ENCODE measurements at regions of chr6 and their contacts with region 1.

Region 1: GRCh38 chr6:154156135-154156896 is 117.3 kb downstream of the OPRM1 start:
- DNase-seq: peak; percentile 26
- H3K4me3 Mint-ChIP-seq: peak overlapping the region; percentile 43
- H3K27ac Mint-ChIP-seq: peak overlapping the region; percentile 84
- H3K4me1 Mint-ChIP-seq: peaks cover 26% of the 10 kb centered on the region
- H3K27me3 Mint-ChIP-seq: peaks cover 5% of the 10 kb centered on the region

Region 2: GRCh38 chr6:154229786-154230185 is 73.5 kb after region 1 on chr6:
- intact Hi-C with region 1: loop called (anchors 1 kb)
- DNase-seq: peak; percentile 49
- H3K4me3 Mint-ChIP-seq: peak overlapping the region; percentile 46
- H3K27ac Mint-ChIP-seq: peak overlapping the region; percentile 47
- H3K4me1 Mint-ChIP-seq: peaks cover 57% of the 10 kb centered on the region
- H3K27me3 Mint-ChIP-seq: no peaks in the 10 kb centered on the region

Region 3: DNA sequence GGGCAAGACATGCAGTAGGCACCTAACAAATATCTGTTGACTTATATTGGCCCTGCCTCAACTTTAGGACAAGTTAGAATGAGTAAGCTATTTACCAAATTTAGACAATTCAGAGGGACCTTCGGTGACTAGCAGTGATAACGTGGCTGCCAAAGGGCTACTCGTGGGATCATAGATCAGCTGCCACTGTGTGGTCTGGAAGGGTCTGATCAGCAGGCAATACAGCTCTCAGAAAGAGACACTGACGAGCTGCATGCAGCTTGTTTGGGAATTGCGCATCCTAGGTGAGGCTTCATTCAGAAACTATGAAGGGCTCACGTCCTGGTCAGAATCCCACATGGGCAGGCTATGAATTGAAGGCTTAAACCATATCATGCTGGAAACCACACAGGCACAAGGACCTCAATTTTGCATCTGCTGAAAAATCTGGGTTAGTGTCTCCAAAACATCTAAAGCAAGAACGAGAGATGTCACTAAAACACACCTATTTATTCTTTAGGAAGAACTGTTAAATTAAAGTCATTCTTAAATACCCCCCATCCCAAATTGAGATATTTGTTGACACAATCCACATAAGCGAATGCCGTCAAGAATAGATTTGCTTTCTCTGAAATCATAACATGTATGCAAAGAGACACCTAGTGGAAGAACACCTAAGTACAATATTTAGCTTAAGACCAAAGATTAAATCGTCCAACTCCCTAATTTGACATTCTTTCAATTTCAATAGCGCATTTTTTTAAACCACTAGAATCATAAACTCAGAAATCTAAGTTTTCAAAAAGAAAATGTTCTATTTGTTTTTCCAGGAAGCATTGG is 120.7 kb after region 1 on chr6:
- intact Hi-C with region 1: loop called (anchors 1 kb)
- DNase-seq: no peak
- H3K4me3 Mint-ChIP-seq: peak overlapping the region; percentile 65
- H3K27ac Mint-ChIP-seq: peak overlapping the region; percentile 74
- H3K4me1 Mint-ChIP-seq: peaks cover 23% of the 10 kb centered on the region
- H3K27me3 Mint-ChIP-seq: peaks cover 18% of the 10 kb centered on the region

Region 4: GRCh38 chr6:154370545-154370944 is 214.2 kb after region 1 on chr6:
- intact Hi-C with region 1: loop called (anchors 1 kb)
- DNase-seq: no peak
- H3K4me3 Mint-ChIP-seq: no peak overlapping the region
- H3K27ac Mint-ChIP-seq: no peak overlapping the region
- H3K4me1 Mint-ChIP-seq: no peaks in the 10 kb centered on the region
- H3K27me3 Mint-ChIP-seq: no peaks in the 10 kb centered on the region

Region 5: GRCh38 chr6:154509421-154510142 is 353.3 kb after region 1 on chr6:
- intact Hi-C with region 1: loop called (anchors 10 kb)
- DNase-seq: no peak
- H3K4me3 Mint-ChIP-seq: no peak overlapping the region
- H3K27ac Mint-ChIP-seq: no peak overlapping the region
- H3K4me1 Mint-ChIP-seq: peaks cover 5% of the 10 kb centered on the region
- H3K27me3 Mint-ChIP-seq: peaks cover 48% of the 10 kb centered on the region

Region 6: DNA sequence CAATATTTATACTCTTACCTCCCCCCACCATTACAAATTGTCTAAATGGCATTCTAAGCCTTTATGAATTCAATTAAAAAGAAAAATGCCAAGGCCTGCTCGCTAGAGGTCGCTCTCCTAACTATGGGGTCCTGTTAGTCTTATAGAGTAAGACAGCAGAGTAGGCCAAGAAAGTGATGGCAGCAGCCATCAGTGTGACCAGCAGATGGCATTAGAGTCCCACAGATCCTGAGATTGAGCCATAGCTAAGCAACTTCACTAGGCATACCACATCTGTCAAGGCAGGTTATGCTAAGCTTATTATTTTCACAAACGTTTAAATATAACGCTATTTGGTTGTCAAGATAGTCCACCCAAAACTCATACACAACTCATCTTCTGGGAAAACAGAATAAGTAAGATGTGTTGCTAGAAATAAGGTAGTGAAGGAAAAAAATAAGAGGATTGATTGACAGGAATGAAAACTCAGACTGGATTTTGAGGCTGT is 519.3 kb after region 1 on chr6:
- intact Hi-C with region 1: loop called (anchors 1 kb)
- DNase-seq: peak; percentile 77
- H3K4me3 Mint-ChIP-seq: no peak overlapping the region
- H3K27ac Mint-ChIP-seq: no peak overlapping the region
- H3K4me1 Mint-ChIP-seq: no peaks in the 10 kb centered on the region
- H3K27me3 Mint-ChIP-seq: peaks cover 4% of the 10 kb centered on the region

Region 7: DNA sequence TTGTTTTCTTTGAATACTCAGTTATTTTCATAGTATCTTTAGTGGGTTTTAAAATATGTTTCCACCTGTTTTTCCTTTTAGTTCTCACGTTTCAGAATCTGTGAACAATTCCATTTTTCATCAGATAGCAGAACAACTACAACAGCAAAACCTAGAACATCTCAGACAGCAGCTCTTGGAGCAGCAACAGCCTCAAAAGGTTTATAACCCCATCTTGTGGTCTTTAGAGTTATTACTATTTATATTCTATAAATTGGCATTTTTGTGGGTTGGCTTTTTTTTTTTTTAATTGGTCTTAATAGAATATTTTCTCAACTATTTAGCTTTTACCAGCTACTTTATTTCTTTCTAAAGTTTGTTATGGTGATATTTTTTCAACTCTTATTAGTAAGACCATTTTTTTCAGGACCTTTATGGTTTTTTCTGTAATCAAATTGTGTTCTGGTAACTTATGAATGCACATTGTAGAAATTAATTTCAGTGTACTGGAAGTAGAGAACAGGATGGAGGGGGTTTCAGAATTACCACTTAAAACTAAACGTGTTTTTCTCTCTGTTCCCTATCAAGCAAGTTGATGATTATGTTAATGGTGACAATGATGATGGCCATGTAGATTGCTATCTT is 649.1 kb after region 1 on chr6:
- intact Hi-C with region 1: loop called (anchors 10 kb)
- DNase-seq: no peak
- H3K4me3 Mint-ChIP-seq: no peak overlapping the region
- H3K27ac Mint-ChIP-seq: no peak overlapping the region
- H3K4me1 Mint-ChIP-seq: peaks cover 4% of the 10 kb centered on the region
- H3K27me3 Mint-ChIP-seq: no peaks in the 10 kb centered on the region

Region 8: GRCh38 chr6:155436981-155437749 is 1280.8 kb after region 1 on chr6:
- intact Hi-C with region 1: no loop called
- DNase-seq: no peak
- H3K4me3 Mint-ChIP-seq: no peak overlapping the region
- H3K27ac Mint-ChIP-seq: no peak overlapping the region
- H3K4me1 Mint-ChIP-seq: peaks cover 5% of the 10 kb centered on the region
- H3K27me3 Mint-ChIP-seq: no peaks in the 10 kb centered on the region